Activated B cell treated with CpG ODN at 0.5 μM for 24 hours (primary cell): ENCODE measurements at regions of chr9 and their contacts with region 1.

Region 1: DNA sequence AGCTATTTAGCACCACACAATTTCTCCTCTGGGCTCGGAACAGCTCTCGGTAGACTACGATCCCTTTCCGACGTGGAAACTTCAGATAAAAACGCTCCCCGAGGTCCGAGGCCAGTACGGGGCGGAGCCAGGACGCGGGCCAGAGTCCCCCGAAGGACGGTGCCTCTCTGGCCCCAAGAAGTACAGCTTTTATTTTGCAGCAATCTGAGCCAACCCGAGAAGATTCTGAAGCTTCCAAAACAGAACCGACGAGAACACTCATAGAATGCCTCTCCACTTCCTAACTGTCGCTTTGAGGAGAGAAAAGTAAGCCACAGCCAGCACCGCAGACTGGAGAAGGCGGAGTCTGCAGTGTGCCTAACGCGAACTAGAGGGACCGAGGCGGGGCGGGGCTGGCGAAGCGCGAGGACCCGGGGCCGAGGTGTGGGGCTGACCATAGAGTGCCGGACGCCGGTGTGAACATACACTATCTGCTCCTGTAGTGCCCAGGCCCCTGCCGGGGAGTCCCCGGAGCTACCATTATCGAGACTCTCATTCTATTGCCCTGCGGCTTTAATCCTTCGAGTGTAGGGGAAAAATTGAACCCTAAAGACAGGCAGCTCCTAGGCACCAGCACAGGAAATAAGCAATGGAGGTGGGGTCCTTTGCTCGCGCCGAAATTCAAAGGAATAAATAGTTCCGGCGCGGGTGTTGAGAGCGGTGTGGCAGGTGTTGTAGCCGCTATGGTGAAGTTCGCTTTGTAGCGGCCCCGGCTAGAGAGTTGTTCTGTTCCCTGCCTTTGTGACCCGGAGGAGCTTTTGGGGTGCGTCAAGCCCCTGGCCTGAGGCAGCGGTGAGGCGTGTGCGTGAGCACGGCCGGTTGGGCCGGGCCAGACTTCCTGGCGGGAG is at the start of gene SMC2:
- DNase-seq: peak; percentile 90
- ATAC-seq: peak; percentile 97
- H3K4me3 Mint-ChIP-seq: peak within 1 kb of the TSS; percentile 99
- H3K27ac Mint-ChIP-seq: peak within 1 kb of the TSS; percentile 99
- H3K4me1 Mint-ChIP-seq: peaks cover 31% of the 10 kb centered on the region
- H3K27me3 Mint-ChIP-seq: no peaks in the 10 kb centered on the region
- CTCF ChIP-seq: no peak
- total RNA-seq, gene SMC2: 12.5 and 13.5 TPM in 2 replicates

Region 2: DNA sequence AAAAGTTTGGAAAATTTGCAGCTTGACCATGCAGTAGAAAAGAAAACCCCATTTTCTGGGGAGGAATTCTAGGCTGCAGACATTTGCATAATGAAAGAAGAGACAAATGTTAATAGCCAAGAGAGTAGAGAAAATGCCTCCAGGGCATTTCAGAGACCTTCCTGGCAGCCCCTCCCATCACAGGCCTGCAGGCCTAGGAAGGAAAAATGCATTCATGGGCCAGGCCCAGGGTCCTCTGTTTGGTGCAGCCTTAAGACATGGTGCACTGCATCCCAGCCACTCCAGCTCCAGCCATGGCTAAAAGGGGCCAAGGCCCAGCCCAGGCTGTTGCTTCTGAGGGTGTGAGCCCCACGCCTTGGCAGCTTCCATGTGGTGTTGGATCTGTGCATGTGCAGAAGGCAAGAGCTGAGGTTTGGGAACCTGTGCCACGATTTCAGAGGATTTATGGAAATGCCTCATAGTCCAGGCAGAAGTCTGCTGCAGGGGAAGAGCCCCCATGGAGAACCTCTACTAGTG is 335.2 kb after region 1 on chr9:
- CTCF ChIA-PET with region 1: no interaction called
- POLR2A ChIA-PET with region 1: no interaction called
- intact Hi-C with region 1: no loop called
- DNase-seq: no peak
- ATAC-seq: no peak
- H3K4me3 Mint-ChIP-seq: no peak overlapping the region
- H3K27ac Mint-ChIP-seq: no peak overlapping the region
- H3K4me1 Mint-ChIP-seq: no peaks in the 10 kb centered on the region
- H3K27me3 Mint-ChIP-seq: no peaks in the 10 kb centered on the region
- CTCF ChIP-seq: no peak

Region 3: GRCh38 chr9:104765138-104765537 is 671.2 kb after region 1 on chr9:
- CTCF ChIA-PET with region 1: no interaction called
- POLR2A ChIA-PET with region 1: interaction called, 6 read pairs
- intact Hi-C with region 1: loop called (anchors 1 kb)
- DNase-seq: no peak
- ATAC-seq: peak; percentile 8
- H3K4me3 Mint-ChIP-seq: peak overlapping the region; percentile 90
- H3K27ac Mint-ChIP-seq: peak overlapping the region; percentile 90
- H3K4me1 Mint-ChIP-seq: peaks cover 44% of the 10 kb centered on the region
- H3K27me3 Mint-ChIP-seq: no peaks in the 10 kb centered on the region
- CTCF ChIP-seq: no peak